Heart left ventricle (tissue), 16 donors: ENCODE measurements at regions of chr11 and their contacts with region 1.

Region 1: GRCh38 chr11:66835768-66836405 is 7.4 kb upstream of the RCE1 start:
- DNase-seq: no peak
- ATAC-seq: no peak
- H3K4me3 ChIP-seq: no peak overlapping the region
- H3K27ac ChIP-seq: no peak overlapping the region
- H3K4me1 ChIP-seq: peaks cover 0 to 7% (median 0%) of the 10 kb centered on the region in 12 donors
- H3K27me3 ChIP-seq: no peaks in the 10 kb centered on the region
- CTCF ChIP-seq: no peak
- POLR2A ChIP-seq: no peak

Region 2: DNA sequence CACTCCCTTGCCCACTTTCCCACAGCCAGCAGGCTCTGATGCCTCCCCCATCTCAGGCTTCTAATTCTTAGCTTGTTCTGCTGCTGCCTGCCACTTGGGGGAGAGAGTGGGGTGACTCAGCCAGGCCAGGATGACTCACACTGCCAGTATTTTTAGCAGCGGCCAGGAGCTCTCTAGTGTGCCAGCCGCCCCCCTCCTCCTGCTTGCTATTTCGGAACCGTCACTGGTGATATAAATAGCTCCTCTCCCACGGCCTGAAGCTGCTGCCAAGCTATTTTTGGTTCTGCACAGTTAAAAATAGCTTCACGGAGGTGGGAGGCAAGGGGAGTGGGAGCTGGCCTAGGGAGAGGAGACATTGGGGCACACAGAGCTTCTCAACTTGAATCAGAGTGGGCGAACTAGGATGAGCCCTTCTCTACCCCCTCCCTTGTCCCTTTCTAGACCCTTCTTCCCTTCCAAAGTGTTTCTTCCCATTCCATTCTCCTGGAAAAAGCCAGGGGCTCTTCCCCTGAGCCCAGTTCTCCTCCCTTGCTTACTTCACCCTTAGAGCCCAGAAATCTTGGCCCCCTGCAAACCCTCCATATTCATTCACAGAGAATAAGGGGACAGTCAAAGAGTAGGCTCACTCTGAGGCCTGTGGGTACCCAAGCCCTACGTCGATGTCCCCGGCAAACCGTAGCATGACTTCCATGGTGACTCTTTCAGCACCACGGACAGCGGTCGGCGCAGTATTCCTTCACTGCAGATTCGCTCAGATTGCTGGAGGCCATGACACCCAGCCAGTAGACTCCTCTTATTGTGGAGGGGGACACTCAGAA is 417.5 kb before region 1 on chr11:
- intact Hi-C with region 1: loop called in 1 of 10 experiments (anchors 10 kb)
- DNase-seq: peak; percentile 78 to 91 (median 83)
- ATAC-seq: peak; percentile 94 to 98 (median 94)
- H3K4me3 ChIP-seq: no peak overlapping the region
- H3K27ac ChIP-seq: peak overlapping the region in 3 of 12 donors; percentile 35 to 72 (median 68)
- H3K4me1 ChIP-seq: peaks cover 0 to 53% (median 25%) of the 10 kb centered on the region in 12 donors
- H3K27me3 ChIP-seq: peaks cover 0 to 29% (median 3%) of the 10 kb centered on the region in 9 donors
- CTCF ChIP-seq: peak in 7 of 12 donors; percentile 39 to 58 (median 40)
- POLR2A ChIP-seq: no peak

Region 3: GRCh38 chr11:66568124-66568916 is 267.6 kb before region 1 on chr11 and contains the start of gene CTSF:
- intact Hi-C with region 1: loop called in 3 of 10 experiments (anchors 10 kb)
- DNase-seq: peak; percentile 85 to 95 (median 87)
- ATAC-seq: peak; percentile 81 to 98 (median 97)
- H3K4me3 ChIP-seq: peak within 1 kb of the TSS; percentile 53 to 94 (median 68)
- H3K27ac ChIP-seq: peak within 1 kb of the TSS in 7 of 12 donors; percentile 15 to 71 (median 43)
- H3K4me1 ChIP-seq: peaks cover 0 to 17% (median 12%) of the 10 kb centered on the region in 12 donors
- H3K27me3 ChIP-seq: peaks cover 0 to 6% (median 0%) of the 10 kb centered on the region in 9 donors
- CTCF ChIP-seq: no peak
- POLR2A ChIP-seq: peak in 1 of 2 donors; percentile 57
- total RNA-seq, gene CTSF: 34.6 to 76.4 (median 52.8) TPM

Region 4: GRCh38 chr11:66579017-66579606 is 256.8 kb before region 1 on chr11:
- intact Hi-C with region 1: loop called in 3 of 10 experiments (anchors 10 kb)
- DNase-seq: peak; percentile 79 to 90 (median 82)
- ATAC-seq: peak; percentile 78 to 97 (median 88)
- H3K4me3 ChIP-seq: no peak overlapping the region
- H3K27ac ChIP-seq: no peak overlapping the region
- H3K4me1 ChIP-seq: peaks cover 0 to 8% (median 0%) of the 10 kb centered on the region in 12 donors
- H3K27me3 ChIP-seq: no peaks in the 10 kb centered on the region
- CTCF ChIP-seq: peak; percentile 72 to 87 (median 82)
- POLR2A ChIP-seq: no peak

Region 5: DNA sequence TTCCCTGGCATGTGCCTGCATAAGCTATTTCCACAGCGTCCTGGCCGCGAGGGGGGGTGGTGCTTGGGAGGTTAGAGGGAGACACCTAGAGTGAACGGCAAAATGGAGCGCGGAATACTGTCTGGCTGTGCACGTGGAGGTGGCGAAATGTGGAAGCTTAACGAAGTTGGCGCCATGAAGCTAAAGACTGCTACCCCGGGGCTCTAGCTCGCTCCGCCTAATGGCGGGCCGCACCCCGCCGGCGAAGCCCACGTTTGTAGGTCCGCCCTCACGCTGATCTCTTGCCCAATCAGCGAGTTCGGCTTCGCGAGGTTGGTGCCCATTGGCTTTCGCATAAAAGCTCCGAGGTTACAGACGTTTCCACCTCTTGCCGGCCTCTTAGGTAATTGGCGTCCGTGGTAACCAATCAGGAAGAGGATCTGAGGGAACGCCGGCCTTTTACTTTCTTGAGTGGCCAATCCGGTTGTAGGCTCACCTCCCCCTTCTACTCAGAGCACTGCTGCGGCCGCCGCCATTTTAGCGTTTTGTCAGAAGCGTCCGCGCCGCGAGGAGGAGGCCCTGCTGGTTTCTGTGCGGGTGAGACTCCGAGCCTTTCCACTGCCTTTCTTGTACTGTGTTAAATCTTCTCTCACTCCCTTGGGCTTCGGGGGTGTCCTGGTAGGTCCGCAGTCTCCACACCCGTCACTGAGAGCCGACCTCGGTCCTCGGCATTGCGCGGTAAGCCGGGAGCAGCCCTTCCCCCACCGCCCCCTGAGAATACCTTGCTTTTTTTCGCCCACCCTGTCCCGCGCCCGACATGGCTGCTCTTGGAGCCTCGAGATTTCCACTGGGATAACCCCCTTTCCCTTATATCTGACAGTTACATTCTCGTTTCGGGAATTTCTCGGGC is 197.5 kb before region 1 on chr11 and contains the start of gene RBM4:
- intact Hi-C with region 1: no loop called
- DNase-seq: peak; percentile 96 to 99 (median 98)
- ATAC-seq: peak; percentile 97 to 99 (median 98)
- H3K4me3 ChIP-seq: peak within 1 kb of the TSS; percentile 56 to 94 (median 75)
- H3K27ac ChIP-seq: peak within 1 kb of the TSS; percentile 43 to 93 (median 88)
- H3K4me1 ChIP-seq: peaks cover 17 to 64% (median 49%) of the 10 kb centered on the region in 12 donors
- H3K27me3 ChIP-seq: no peaks in the 10 kb centered on the region
- CTCF ChIP-seq: peak in 3 of 12 donors; percentile 9 to 30 (median 28)
- POLR2A ChIP-seq: peak; percentile 59 to 83
- total RNA-seq, gene RBM4: 46.4 to 89.4 (median 56.6) TPM

Region 6: GRCh38 chr11:66694732-66695207 is 141.1 kb before region 1 on chr11:
- intact Hi-C with region 1: loop called (anchors 1 to 2 kb)
- DNase-seq: peak; percentile 82 to 91 (median 85)
- ATAC-seq: peak; percentile 61 to 90 (median 88)
- H3K4me3 ChIP-seq: no peak overlapping the region
- H3K27ac ChIP-seq: peak overlapping the region in 1 of 12 donors; percentile 20
- H3K4me1 ChIP-seq: peaks cover 0 to 7% (median 0%) of the 10 kb centered on the region in 12 donors
- H3K27me3 ChIP-seq: no peaks in the 10 kb centered on the region
- CTCF ChIP-seq: peak; percentile 85 to 94 (median 90)
- POLR2A ChIP-seq: no peak